ENCODE measurements at regions of chr9 and their contacts with region 1.

Region 1: DNA sequence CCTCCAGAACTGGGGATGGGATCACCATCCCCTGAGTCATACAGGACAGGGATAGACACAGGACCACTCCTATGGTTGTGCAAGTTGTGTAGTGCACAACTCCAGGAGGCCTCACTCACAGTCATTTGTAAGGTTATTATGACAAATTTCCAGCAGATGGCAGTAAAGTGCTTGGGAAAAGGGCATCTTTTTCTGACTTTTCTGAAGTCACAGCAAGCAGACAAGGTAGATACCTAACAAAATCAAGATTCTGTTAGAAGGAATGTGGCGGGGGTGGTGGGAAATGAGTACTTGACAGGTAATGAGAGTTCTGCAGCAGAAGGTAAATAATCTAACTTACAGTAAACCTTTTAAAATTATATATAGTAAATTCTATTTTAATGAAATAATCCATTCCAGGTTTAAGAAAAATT is 16.7 kb upstream of the KIF27 start:
- DNase-seq: peak; percentile 33 to 61
- H3K4me3 ChIP-seq: no peak overlapping the region
- H3K27ac ChIP-seq: no peak overlapping the region
- H3K4me1 ChIP-seq: peaks cover 23% of the 10 kb centered on the region
- H3K27me3 ChIP-seq: no peaks in the 10 kb centered on the region
- CTCF ChIP-seq: peak; percentile 84

Region 2: GRCh38 chr9:83980395-83981125 is 42.6 kb after region 1 on chr9 and contains the start of gene RMI1:
- CTCF ChIA-PET with region 1: no interaction called
- POLR2A ChIA-PET with region 1: interaction called, 4 read pairs
- intact Hi-C with region 1: loop called (anchors 2 kb)
- DNase-seq: peak; percentile 91 to 97
- H3K4me3 ChIP-seq: peak within 1 kb of the TSS; percentile 98
- H3K27ac ChIP-seq: peak within 1 kb of the TSS; percentile 94
- H3K4me1 ChIP-seq: peaks cover 26% of the 10 kb centered on the region
- H3K27me3 ChIP-seq: no peaks in the 10 kb centered on the region
- CTCF ChIP-seq: no peak
- total RNA-seq, gene RMI1: 13.9 and 19.2 TPM in 2 replicates

Region 3: GRCh38 chr9:84079994-84080393 is 142.1 kb after region 1 on chr9:
- CTCF ChIA-PET with region 1: no interaction called
- POLR2A ChIA-PET with region 1: no interaction called
- intact Hi-C with region 1: no loop called
- DNase-seq: no peak
- H3K4me3 ChIP-seq: no peak overlapping the region
- H3K27ac ChIP-seq: no peak overlapping the region
- H3K4me1 ChIP-seq: no peaks in the 10 kb centered on the region
- H3K27me3 ChIP-seq: no peaks in the 10 kb centered on the region; the same call in 1 of the 2 replicates
- CTCF ChIP-seq: no peak

Region 4: GRCh38 chr9:84163052-84163650 is 225.2 kb after region 1 on chr9:
- CTCF ChIA-PET with region 1: no interaction called
- POLR2A ChIA-PET with region 1: no interaction called
- intact Hi-C with region 1: no loop called
- DNase-seq: no peak
- H3K4me3 ChIP-seq: no peak overlapping the region
- H3K27ac ChIP-seq: no peak overlapping the region
- H3K4me1 ChIP-seq: no peaks in the 10 kb centered on the region
- H3K27me3 ChIP-seq: no peaks in the 10 kb centered on the region
- CTCF ChIP-seq: no peak

Region 5: DNA sequence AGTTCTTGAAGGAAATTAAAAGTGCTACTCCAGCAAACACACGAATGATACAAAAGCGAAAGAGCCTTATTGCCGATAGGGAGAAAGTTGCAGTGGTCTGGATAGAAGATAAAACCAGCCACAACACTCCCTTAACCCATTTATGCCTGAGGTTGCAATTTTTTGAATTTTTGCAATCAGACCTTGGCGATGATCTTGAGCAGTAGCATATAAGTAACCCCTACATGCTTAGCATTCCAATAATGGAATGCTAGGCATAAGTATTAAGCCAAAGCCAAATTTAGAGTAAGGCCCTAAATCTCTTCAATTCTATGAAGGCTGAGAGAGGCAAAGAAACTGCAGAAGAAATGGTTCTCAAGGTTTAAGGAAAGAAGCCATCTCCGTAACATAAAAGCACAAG is 249.2 kb after region 1 on chr9:
- CTCF ChIA-PET with region 1: no interaction called
- POLR2A ChIA-PET with region 1: no interaction called
- intact Hi-C with region 1: loop called (anchors 1 kb)
- DNase-seq: no peak
- H3K4me3 ChIP-seq: no peak overlapping the region
- H3K27ac ChIP-seq: no peak overlapping the region
- H3K4me1 ChIP-seq: peaks cover 7% of the 10 kb centered on the region
- H3K27me3 ChIP-seq: no peaks in the 10 kb centered on the region
- CTCF ChIP-seq: no peak

Region 6: GRCh38 chr9:84261082-84261746 is 323.3 kb after region 1 on chr9:
- CTCF ChIA-PET with region 1: no interaction called
- POLR2A ChIA-PET with region 1: no interaction called
- intact Hi-C with region 1: loop called (anchors 1 kb)
- DNase-seq: peak; percentile 72 to 77
- H3K4me3 ChIP-seq: no peak overlapping the region
- H3K27ac ChIP-seq: no peak overlapping the region
- H3K4me1 ChIP-seq: 0 out of 2 replicates have a peak, but pooled peaks cover 3% of the 10 kb centered on the region
- H3K27me3 ChIP-seq: no peaks in the 10 kb centered on the region
- CTCF ChIP-seq: peak; percentile 90

Region 7: GRCh38 chr9:84301851-84302250 is 363.9 kb after region 1 on chr9:
- CTCF ChIA-PET with region 1: interaction called, 11 read pairs
- POLR2A ChIA-PET with region 1: no interaction called
- intact Hi-C with region 1: no loop called
- DNase-seq: no peak
- H3K4me3 ChIP-seq: no peak overlapping the region
- H3K27ac ChIP-seq: no peak overlapping the region
- H3K4me1 ChIP-seq: no peaks in the 10 kb centered on the region
- H3K27me3 ChIP-seq: no peaks in the 10 kb centered on the region
- CTCF ChIP-seq: no peak

Region 8: DNA sequence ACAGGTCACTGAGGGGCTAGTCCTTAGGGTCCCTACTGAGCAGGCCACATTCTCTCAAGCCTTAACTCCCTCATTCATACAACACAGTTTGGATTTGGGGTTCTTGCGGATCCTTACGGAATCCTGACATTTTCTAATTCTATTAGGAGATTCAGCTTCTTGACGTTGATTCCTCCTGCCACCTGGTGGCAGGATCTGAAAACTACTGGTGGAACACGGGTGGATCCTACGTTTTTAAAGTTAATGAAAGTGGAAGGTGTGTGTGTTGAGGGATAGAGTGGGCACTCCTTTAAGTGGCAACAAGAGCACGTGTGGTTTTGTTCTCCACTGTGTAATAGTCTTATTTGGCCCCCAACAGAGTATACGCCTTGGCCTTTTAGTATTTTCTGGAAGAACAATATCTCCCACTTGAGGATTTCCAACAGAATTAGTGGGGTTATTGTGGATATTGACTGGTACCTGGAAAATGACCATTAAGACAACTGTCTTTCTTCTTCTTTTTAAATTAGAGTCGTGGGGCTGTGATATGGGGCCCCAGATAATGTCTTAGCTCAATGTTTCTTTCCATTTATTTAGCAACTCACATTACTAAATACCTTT is 377.5 kb after region 1 on chr9:
- CTCF ChIA-PET with region 1: interaction called, 5 read pairs
- POLR2A ChIA-PET with region 1: no interaction called
- intact Hi-C with region 1: loop called (anchors 1 kb)
- DNase-seq: peak; percentile 38 to 52
- H3K4me3 ChIP-seq: no peak overlapping the region
- H3K27ac ChIP-seq: no peak overlapping the region
- H3K4me1 ChIP-seq: no peaks in the 10 kb centered on the region
- H3K27me3 ChIP-seq: no peaks in the 10 kb centered on the region
- CTCF ChIP-seq: peak; percentile 91

Measured in PC-9 (cell line).